ENCODE measurements at regions of chr6 and their contacts with region 1.

Region 1: DNA sequence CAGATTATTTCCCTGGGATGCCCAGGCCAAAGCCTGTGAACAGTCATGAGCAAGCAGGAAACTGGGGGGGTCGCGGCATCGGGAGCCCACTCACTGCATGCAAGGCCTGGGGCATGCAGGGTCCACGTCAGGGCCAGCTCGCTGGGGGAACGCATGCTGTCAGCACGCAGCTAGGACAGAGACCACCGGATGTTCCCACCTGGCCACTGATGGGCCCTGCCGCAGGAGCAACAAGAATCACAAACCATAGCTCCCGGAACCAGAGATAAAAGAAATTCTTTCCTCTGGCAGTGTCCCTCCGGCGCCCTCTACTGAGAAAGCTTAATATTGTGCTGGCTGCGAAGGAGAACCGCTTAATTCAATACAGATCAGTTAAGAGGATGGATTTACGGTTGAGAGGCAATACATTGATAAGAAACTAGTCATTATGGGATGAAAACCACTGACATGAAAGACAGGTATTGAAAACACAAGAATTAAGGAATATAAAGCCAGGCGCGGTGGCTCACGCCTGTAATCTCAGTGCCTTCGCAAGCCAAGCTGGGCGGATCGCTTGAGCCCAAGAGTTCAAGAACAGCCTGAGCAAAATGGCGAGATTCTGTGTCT is 32.6 kb downstream of the C6orf15 start:
- DNase-seq: peak; percentile 70
- H3K4me3 Mint-ChIP-seq: no peak overlapping the region
- H3K27ac Mint-ChIP-seq: no peak overlapping the region
- H3K4me1 Mint-ChIP-seq: peaks cover 9% of the 10 kb centered on the region
- H3K27me3 Mint-ChIP-seq: peaks cover 12% of the 10 kb centered on the region

Region 2: GRCh38 chr6:30914076-30914853 is 165.5 kb before region 1 on chr6 and contains the start of gene VARS2:
- CTCF ChIA-PET with region 1: interaction called, 70 read pairs
- POLR2A ChIA-PET with region 1: interaction called, 10 read pairs
- DNase-seq: peak; percentile 90
- H3K4me3 Mint-ChIP-seq: peak within 1 kb of the TSS; percentile 87
- H3K27ac Mint-ChIP-seq: peak within 1 kb of the TSS; percentile 83
- H3K4me1 Mint-ChIP-seq: peaks cover 29% of the 10 kb centered on the region
- H3K27me3 Mint-ChIP-seq: no peaks in the 10 kb centered on the region
- total RNA-seq, gene VARS2: 33.6 to 37.0 TPM

Region 3: GRCh38 chr6:31094389-31094881 is 14.7 kb after region 1 on chr6:
- CTCF ChIA-PET with region 1: interaction called, 29 read pairs
- POLR2A ChIA-PET with region 1: interaction called, 4 read pairs
- DNase-seq: peak; percentile 56
- H3K4me3 Mint-ChIP-seq: peak overlapping the region; percentile 21
- H3K27ac Mint-ChIP-seq: peak overlapping the region; percentile 90
- H3K4me1 Mint-ChIP-seq: peaks cover 27% of the 10 kb centered on the region
- H3K27me3 Mint-ChIP-seq: no peaks in the 10 kb centered on the region

Measured in activated CD4-positive, alpha-beta memory T cell treated with anti-CD3 and anti-CD28 coated beads, Interleukin-2, amount 10 ng/mL, durations not matched to agents 7 days and 5 days (primary cell).